ENCODE measurements at regions of chr2 and their contacts with region 1.

Region 1: GRCh38 chr2:86174445-86174844 is 20.8 kb downstream of the IMMT start:
- DNase-seq: no peak
- ATAC-seq: no peak
- H3K4me3 ChIP-seq: no peak overlapping the region
- H3K27ac ChIP-seq: no peak overlapping the region
- H3K4me1 ChIP-seq: peaks cover 0 to 28% (median 18%) of the 10 kb centered on the region in 9 donors
- H3K27me3 ChIP-seq: no peaks in the 10 kb centered on the region
- CTCF ChIP-seq: no peak

Region 2: DNA sequence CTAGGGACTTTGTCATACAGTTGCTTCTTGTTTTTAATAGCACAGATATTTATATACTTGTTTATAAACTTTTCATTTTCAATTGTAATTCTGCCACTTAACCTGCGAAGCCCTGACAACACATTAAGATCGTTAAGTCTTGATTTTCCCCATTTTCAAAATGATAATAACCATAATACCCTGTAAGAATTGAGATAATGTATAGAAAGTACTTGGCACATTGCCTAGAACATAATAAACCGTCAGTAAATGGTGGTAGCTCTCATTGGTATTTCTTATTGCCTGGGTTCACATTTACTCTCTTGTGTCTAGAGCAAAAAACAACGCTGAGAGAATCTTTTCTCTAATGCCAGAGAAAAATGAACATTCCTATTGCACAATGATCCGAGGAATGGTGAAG is 49.8 kb before region 1 on chr2:
- intact Hi-C with region 1: loop called in 1 of 10 experiments (anchors 5 kb)
- DNase-seq: no peak
- ATAC-seq: no peak
- H3K4me3 ChIP-seq: no peak overlapping the region
- H3K27ac ChIP-seq: no peak overlapping the region
- H3K4me1 ChIP-seq: no peaks in the 10 kb centered on the region
- H3K27me3 ChIP-seq: no peaks in the 10 kb centered on the region
- CTCF ChIP-seq: no peak

Region 3: DNA sequence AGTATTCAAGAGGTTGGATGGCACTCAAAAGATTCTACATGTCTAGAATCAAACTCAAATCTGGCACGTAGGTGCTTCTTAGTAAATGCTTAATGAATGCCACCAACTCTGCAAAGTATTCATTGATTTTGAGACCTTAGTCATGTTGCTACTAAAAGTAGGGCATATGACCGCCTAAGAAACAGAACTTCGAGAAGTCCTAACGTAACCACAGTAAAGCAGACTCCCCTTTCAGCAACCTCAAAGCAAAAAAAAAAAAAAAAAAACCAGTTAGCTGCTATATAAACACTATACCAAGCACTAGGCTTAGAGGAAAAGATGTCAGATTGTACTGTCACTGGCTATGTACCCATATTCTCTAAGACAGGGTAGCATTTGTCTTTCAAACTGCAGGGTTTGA is 34.5 kb before region 1 on chr2:
- intact Hi-C with region 1: loop called in 1 of 10 experiments (anchors 5 kb)
- DNase-seq: no peak
- ATAC-seq: no peak
- H3K4me3 ChIP-seq: no peak overlapping the region
- H3K27ac ChIP-seq: no peak overlapping the region
- H3K4me1 ChIP-seq: no peaks in the 10 kb centered on the region
- H3K27me3 ChIP-seq: no peaks in the 10 kb centered on the region
- CTCF ChIP-seq: no peak

Region 4: GRCh38 chr2:86213699-86214502 is 39.5 kb after region 1 on chr2:
- intact Hi-C with region 1: no loop called
- DNase-seq: no peak
- ATAC-seq: peak in 1 of 8 donors; percentile 21
- H3K4me3 ChIP-seq: no peak overlapping the region
- H3K27ac ChIP-seq: peak overlapping the region in 2 of 10 donors; percentile 3 to 67
- H3K4me1 ChIP-seq: peaks cover 0 to 35% (median 9%) of the 10 kb centered on the region in 9 donors
- H3K27me3 ChIP-seq: no peaks in the 10 kb centered on the region
- CTCF ChIP-seq: no peak